WTC11 (cell line): ENCODE measurements at regions of chr19 and their contacts with region 1.

Region 1: DNA sequence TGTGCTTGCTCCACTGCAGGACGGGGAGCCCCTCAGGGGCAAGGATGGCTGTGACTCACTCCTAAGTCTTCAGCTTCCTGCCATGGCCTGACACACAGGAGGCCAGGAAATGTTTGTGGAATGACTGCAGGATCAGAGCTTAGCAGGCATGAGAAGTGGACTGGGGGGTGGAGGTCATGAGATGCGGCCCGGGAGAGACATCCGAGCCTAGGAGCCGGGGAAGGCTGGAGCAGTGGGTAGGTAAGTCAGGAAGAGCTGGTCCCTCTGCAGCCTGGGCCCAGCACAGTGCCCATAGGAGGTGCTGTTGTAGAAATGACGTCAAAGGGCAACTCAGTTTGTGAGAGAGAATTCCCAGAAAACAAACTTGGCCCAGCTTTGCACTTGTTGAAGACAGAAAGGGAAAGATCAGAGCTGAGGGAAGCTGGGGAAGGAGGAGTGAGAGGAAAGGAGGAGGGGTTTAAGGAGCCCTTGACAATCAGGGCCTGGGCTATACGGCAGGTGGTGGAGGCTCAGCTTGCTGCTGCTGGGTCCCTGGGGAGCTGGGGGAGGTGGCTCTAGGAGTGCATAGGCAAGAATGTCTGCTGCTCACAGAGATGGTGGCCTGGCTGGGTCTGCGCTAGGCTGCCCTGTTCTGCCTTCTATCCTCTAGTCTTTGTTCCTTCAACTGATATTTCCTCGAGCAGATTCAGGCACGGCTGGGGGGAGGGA is 18.5 kb downstream of the POU2F2 start:
- DNase-seq: no peak
- ATAC-seq: peak; percentile 77
- H3K4me3 Mint-ChIP-seq: no peak overlapping the region
- H3K27ac Mint-ChIP-seq: peak overlapping the region; percentile 64; the same call in 1 of the 2 replicates
- H3K4me1 Mint-ChIP-seq: peaks cover 19% of the 10 kb centered on the region
- H3K27me3 Mint-ChIP-seq: peaks cover 4% of the 10 kb centered on the region
- CTCF ChIP-seq: no peak

Region 2: DNA sequence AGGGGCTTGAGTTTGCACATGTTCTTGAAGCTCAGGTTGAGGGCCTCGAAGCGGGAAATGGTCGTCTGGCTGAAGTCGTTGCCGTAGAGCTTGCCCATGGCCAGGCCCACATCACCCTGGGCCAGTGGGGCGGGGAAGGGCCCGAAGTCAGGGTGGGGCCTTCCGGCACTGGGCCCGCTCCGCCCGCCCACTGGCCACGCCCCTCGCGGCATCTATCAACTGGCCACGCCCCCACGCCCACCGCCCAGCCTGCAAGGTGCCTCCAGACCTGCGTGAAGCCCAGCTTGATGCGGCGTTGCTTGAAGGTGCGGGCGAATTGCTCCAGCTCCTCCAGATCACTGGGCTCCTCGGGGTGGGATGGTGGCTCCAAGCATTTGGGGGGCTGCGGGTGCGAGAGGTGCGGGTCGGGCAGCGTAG is 18.0 kb before region 1 on chr19:
- CTCF ChIA-PET with region 1: interaction called, 23 read pairs
- POLR2A ChIA-PET with region 1: no interaction called
- DNase-seq: peak; percentile 94
- ATAC-seq: peak; percentile 86
- H3K4me3 Mint-ChIP-seq: peak overlapping the region; percentile 65
- H3K27ac Mint-ChIP-seq: no peak overlapping the region
- H3K4me1 Mint-ChIP-seq: peaks cover 15% of the 10 kb centered on the region
- H3K27me3 Mint-ChIP-seq: peaks cover 20% of the 10 kb centered on the region
- CTCF ChIP-seq: no peak

Region 3: DNA sequence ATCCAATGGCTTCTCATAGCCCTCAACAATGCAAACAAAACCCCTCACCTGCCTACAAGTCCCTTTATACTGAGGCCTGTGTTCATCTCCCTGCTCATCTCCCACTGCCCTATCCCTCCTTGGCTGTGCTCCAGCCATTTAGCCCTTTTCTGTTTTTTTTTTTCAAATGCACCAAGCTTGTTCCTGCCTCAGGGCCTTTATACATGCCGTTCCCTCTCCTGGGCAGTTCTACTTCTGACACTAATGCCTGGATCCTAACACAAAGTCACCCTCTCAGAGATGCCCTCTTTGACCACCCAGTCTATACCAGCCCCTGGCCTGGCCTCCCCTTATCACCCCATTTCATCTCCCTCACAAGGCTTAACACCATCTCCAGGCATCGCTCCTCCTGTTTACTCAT is 10.9 kb before region 1 on chr19:
- CTCF ChIA-PET with region 1: interaction called, 23 read pairs
- POLR2A ChIA-PET with region 1: no interaction called
- DNase-seq: no peak
- ATAC-seq: no peak
- H3K4me3 Mint-ChIP-seq: no peak overlapping the region
- H3K27ac Mint-ChIP-seq: no peak overlapping the region
- H3K4me1 Mint-ChIP-seq: peaks cover 12% of the 10 kb centered on the region
- H3K27me3 Mint-ChIP-seq: peaks cover 21% of the 10 kb centered on the region
- CTCF ChIP-seq: no peak

Region 4: GRCh38 chr19:42132851-42133528 is 19.2 kb after region 1 on chr19:
- CTCF ChIA-PET with region 1: interaction called, 52 read pairs
- POLR2A ChIA-PET with region 1: interaction called, 3 read pairs
- DNase-seq: peak; percentile 91
- ATAC-seq: peak; percentile 86
- H3K4me3 Mint-ChIP-seq: peak overlapping the region; percentile 76
- H3K27ac Mint-ChIP-seq: no peak overlapping the region
- H3K4me1 Mint-ChIP-seq: peaks cover 20% of the 10 kb centered on the region
- H3K27me3 Mint-ChIP-seq: peaks cover 30% of the 10 kb centered on the region
- CTCF ChIP-seq: peak; percentile 91

Region 5: GRCh38 chr19:42176990-42177685 is 63.3 kb after region 1 on chr19:
- CTCF ChIA-PET with region 1: interaction called, 21 read pairs
- POLR2A ChIA-PET with region 1: interaction called, 3 read pairs
- DNase-seq: peak; percentile 85
- ATAC-seq: peak; percentile 84
- H3K4me3 Mint-ChIP-seq: no peak overlapping the region
- H3K27ac Mint-ChIP-seq: no peak overlapping the region
- H3K4me1 Mint-ChIP-seq: peaks cover 18% of the 10 kb centered on the region
- H3K27me3 Mint-ChIP-seq: peaks cover 44% of the 10 kb centered on the region
- CTCF ChIP-seq: no peak

Region 6: GRCh38 chr19:42244347-42245220 is 130.8 kb after region 1 on chr19:
- CTCF ChIA-PET with region 1: interaction called, 15 read pairs
- POLR2A ChIA-PET with region 1: interaction called, 3 read pairs
- DNase-seq: peak; percentile 95
- ATAC-seq: peak; percentile 19
- H3K4me3 Mint-ChIP-seq: peak overlapping the region; percentile 89
- H3K27ac Mint-ChIP-seq: peak overlapping the region; percentile 97
- H3K4me1 Mint-ChIP-seq: peaks cover 35% of the 10 kb centered on the region
- H3K27me3 Mint-ChIP-seq: no peaks in the 10 kb centered on the region
- CTCF ChIP-seq: no peak